Activated CD4-positive, alpha-beta T cell treated with anti-CD3 and anti-CD28 coated beads for 36 hours (primary cell): ENCODE measurements at regions of chr16 and their contacts with region 1.

Region 1: GRCh38 chr16:88569985-88570690 is at the start of gene ZC3H18:
- DNase-seq: peak; percentile 99
- ATAC-seq: peak; percentile 83
- H3K4me3 Mint-ChIP-seq: peak within 1 kb of the TSS; percentile 88
- H3K27ac Mint-ChIP-seq: peak within 1 kb of the TSS; percentile 79
- H3K4me1 Mint-ChIP-seq: peaks cover 44% of the 10 kb centered on the region
- H3K27me3 Mint-ChIP-seq: no peaks in the 10 kb centered on the region
- total RNA-seq, gene ZC3H18: 70.0 to 76.4 TPM

Region 2: DNA sequence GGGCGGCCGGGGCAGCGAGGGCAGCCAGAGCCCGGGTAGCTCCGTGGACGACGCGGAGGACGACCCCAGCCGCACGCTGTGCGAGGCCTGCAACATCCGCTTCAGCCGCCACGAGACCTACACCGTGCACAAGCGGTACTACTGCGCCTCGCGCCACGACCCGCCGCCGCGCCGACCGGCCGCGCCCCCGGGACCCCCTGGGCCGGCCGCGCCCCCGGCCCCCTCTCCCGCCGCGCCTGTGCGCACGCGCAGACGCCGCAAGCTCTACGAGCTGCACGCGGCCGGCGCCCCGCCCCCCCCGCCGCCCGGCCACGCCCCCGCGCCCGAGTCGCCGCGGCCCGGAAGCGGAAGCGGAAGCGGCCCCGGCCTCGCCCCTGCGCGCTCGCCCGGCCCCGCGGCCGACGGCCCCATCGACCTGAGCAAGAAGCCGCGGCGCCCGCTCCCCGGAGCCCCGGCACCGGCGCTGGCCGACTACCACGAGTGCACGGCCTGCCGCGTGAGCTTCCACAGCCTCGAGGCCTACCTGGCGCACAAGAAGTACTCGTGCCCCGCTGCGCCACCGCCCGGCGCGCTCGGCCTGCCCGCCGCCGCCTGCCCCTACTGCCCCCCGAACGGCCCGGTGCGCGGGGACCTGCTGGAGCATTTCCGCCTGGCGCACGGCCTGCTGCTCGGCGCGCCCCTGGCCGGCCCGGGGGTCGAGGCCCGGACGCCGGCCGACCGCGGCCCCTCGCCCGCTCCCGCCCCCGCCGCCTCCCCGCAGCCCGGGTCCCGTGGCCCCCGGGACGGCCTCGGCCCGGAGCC is 36.0 kb before region 1 on chr16:
- CTCF ChIA-PET with region 1: no interaction called
- POLR2A ChIA-PET with region 1: no interaction called
- intact Hi-C with region 1: loop called in 1 of 2 experiments (anchors 1 kb)
- DNase-seq: peak; percentile 89
- ATAC-seq: peak; percentile 78
- H3K4me3 Mint-ChIP-seq: peak overlapping the region; percentile 74
- H3K27ac Mint-ChIP-seq: no peak overlapping the region
- H3K4me1 Mint-ChIP-seq: peaks cover 7% of the 10 kb centered on the region
- H3K27me3 Mint-ChIP-seq: peaks cover 4% of the 10 kb centered on the region

Region 3: DNA sequence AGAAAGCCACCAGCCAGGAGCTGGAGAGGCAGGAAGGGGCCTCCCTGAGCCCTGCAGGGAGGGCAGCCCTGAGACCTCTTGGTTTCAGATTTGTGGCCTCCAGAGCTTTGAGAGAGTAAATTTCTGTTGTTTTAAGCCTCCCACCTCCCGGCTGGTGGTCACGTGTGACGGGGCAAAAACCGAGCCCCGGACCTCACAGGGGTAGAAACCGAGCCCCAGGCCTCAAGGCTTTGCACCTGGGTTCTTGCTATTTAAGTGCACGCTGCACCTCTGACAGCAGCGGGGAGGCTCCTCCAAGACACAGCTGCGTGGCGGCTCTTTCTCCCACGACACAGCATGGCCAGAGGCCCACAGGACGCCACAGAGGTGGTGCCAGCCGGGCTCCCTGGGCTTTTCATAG is 17.3 kb before region 1 on chr16:
- CTCF ChIA-PET with region 1: no interaction called
- POLR2A ChIA-PET with region 1: no interaction called
- intact Hi-C with region 1: no loop called
- DNase-seq: no peak
- ATAC-seq: no peak
- H3K4me3 Mint-ChIP-seq: no peak overlapping the region
- H3K27ac Mint-ChIP-seq: no peak overlapping the region
- H3K4me1 Mint-ChIP-seq: peaks cover 2% of the 10 kb centered on the region
- H3K27me3 Mint-ChIP-seq: peaks cover 10% of the 10 kb centered on the region

Region 4: GRCh38 chr16:88610080-88610479 is 39.9 kb after region 1 on chr16:
- CTCF ChIA-PET with region 1: no interaction called
- POLR2A ChIA-PET with region 1: no interaction called
- intact Hi-C with region 1: no loop called
- DNase-seq: no peak
- ATAC-seq: no peak
- H3K4me3 Mint-ChIP-seq: no peak overlapping the region
- H3K27ac Mint-ChIP-seq: no peak overlapping the region
- H3K4me1 Mint-ChIP-seq: no peaks in the 10 kb centered on the region
- H3K27me3 Mint-ChIP-seq: no peaks in the 10 kb centered on the region

Region 5: DNA sequence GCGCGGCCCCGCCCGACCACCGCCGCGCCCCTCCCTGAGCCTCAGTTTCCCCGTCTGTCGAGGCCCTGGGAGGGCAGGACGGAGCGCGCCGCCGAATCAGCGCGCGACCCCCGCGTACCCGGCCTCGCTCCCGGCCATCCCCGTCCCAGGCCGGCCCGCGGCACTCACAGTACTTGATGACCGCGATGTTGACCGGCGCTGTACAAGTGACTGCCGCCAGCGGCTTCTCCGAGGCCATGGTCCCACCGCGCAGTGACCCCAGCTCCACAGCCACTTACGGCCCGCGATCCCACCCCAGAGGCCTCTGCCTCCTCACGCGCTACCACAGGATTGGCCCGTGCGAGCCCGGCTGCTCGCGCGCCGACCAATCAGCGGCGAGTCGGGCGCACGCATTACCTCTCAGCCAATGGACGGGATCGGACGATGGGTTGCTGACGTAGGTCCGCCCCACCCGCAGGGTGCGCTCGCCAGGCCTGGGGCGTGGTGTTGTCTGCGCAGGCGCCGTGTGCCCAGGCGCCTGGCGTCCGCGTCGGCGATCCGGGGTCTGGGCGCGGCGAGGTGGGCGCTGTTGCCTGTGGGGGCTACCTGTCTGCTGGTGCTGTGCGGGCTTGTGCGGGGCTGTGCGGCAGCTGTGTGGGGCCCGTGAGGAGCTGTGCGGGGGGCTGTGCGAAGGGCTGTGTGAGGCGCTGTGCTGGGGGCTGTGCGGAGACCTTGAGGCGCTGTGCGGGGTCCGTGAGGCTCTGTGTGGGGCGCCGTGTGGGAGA is 92.9 kb after region 1 on chr16 and contains the start of gene MVD:
- CTCF ChIA-PET with region 1: no interaction called
- POLR2A ChIA-PET with region 1: no interaction called
- intact Hi-C with region 1: loop called in 1 of 2 experiments (anchors 1 kb)
- DNase-seq: peak; percentile 98
- ATAC-seq: peak; percentile 99
- H3K4me3 Mint-ChIP-seq: peak within 1 kb of the TSS; percentile 92
- H3K27ac Mint-ChIP-seq: peak within 1 kb of the TSS; percentile 88
- H3K4me1 Mint-ChIP-seq: peaks cover 14% of the 10 kb centered on the region
- H3K27me3 Mint-ChIP-seq: no peaks in the 10 kb centered on the region
- total RNA-seq, gene MVD: 62.8 to 81.1 TPM

Region 6: GRCh38 chr16:88700636-88701482 is 130.7 kb after region 1 on chr16:
- CTCF ChIA-PET with region 1: no interaction called
- POLR2A ChIA-PET with region 1: interaction called, 3 read pairs
- intact Hi-C with region 1: loop called (anchors 1 kb)
- DNase-seq: peak; percentile 98
- ATAC-seq: peak; percentile 80
- H3K4me3 Mint-ChIP-seq: peak overlapping the region; percentile 92
- H3K27ac Mint-ChIP-seq: peak overlapping the region; percentile 97
- H3K4me1 Mint-ChIP-seq: peaks cover 55% of the 10 kb centered on the region
- H3K27me3 Mint-ChIP-seq: no peaks in the 10 kb centered on the region

Region 7: GRCh38 chr16:88803264-88803987 is 233.3 kb after region 1 on chr16 and contains the start of gene CDT1:
- CTCF ChIA-PET with region 1: no interaction called
- POLR2A ChIA-PET with region 1: no interaction called
- intact Hi-C with region 1: loop called in 1 of 2 experiments (anchors 1 kb)
- DNase-seq: peak; percentile 90
- ATAC-seq: peak; percentile 32
- H3K4me3 Mint-ChIP-seq: peak within 1 kb of the TSS; percentile 83
- H3K27ac Mint-ChIP-seq: peak within 1 kb of the TSS; percentile 94
- H3K4me1 Mint-ChIP-seq: peaks cover 24% of the 10 kb centered on the region
- H3K27me3 Mint-ChIP-seq: no peaks in the 10 kb centered on the region
- total RNA-seq, gene CDT1: 136 to 182 TPM

Region 8: DNA sequence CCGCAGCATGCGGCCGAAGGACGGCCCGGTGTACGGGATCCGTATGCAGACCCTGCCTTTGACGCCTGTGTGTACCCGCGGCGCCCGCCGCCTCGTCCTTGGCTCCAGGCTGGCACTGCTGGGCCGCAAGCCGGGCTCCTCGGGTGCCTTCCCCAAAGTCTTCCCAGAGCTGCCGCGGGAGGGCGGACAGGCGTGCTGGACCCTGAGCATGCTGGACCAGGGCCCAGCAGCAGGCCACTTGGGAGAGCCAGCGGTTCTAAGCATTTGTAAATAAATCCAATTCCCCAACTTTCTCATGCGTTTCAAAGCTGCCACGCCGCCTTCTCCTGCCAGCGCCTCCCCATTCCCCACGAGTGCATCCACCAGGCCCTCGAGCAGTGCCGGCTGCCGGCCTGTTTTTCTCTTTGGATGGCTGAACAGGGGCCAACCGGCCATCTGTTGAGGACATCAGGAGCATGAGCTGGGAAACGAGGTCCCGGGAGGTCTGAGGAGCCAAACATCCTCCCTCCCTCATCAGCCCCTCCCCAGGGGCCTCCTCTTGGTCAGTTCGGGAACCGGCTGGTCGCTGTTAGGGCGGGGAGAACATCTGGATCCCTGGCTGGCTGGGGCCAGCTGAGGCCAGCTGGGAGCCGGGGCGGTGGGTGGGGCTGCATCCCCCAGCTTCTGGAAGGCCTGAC is 316.8 kb after region 1 on chr16:
- CTCF ChIA-PET with region 1: no interaction called
- POLR2A ChIA-PET with region 1: no interaction called
- intact Hi-C with region 1: no loop called
- DNase-seq: no peak
- ATAC-seq: no peak
- H3K4me3 Mint-ChIP-seq: no peak overlapping the region
- H3K27ac Mint-ChIP-seq: no peak overlapping the region
- H3K4me1 Mint-ChIP-seq: no peaks in the 10 kb centered on the region
- H3K27me3 Mint-ChIP-seq: no peaks in the 10 kb centered on the region